Adrenal gland (tissue), 19 donors: ENCODE measurements at regions of chr10 and their contacts with region 1.

Region 1: DNA sequence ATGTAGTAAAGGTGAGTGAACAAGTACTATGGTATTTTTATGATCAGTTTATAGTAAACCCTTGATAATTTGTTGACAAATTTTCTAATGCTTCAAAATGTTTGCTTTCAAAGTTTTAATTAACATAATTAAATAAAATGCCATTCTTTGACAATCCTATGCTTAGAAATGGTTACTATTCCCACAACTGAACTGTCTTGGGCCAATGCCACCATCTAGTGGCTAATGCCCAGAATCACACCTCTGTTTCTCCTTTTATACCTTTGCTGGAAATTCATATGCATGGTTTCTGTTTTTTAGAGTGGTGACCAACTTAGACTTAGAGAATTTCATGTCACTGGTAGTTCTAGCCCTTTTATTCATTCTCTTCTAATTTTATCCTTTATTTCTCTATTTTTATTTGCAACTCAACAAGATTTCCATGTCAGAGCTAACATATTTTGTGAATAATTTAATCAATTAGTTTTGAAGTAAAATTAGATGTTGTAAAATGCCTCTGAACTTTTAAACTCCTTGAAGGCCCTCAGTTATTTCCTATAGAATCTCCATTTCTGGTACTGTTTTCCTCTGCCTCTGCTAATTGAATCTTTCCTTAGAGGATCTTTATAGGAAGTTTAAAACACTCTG is 31.1 kb downstream of the PCGF5 start:
- DNase-seq: peak; percentile 38 to 81 (median 54)
- H3K4me3 ChIP-seq: no peak overlapping the region
- H3K27ac ChIP-seq: no peak overlapping the region
- H3K4me1 ChIP-seq: peaks cover 0 to 7% of the 10 kb centered on the region in 2 donors
- H3K27me3 ChIP-seq: no peaks in the 10 kb centered on the region
- CTCF ChIP-seq: peak; percentile 70 to 97 (median 94)
- POLR2A ChIP-seq: no peak

Region 2: GRCh38 chr10:90912174-90912573 is 339.4 kb before region 1 on chr10:
- intact Hi-C with region 1: loop called in 1 of 2 experiments (anchors 10 kb)
- DNase-seq: no peak
- H3K4me3 ChIP-seq: no peak overlapping the region
- H3K27ac ChIP-seq: no peak overlapping the region
- H3K4me1 ChIP-seq: peaks cover 0 to 7% of the 10 kb centered on the region in 2 donors
- H3K27me3 ChIP-seq: no peaks in the 10 kb centered on the region
- CTCF ChIP-seq: no peak
- POLR2A ChIP-seq: no peak

Region 3: DNA sequence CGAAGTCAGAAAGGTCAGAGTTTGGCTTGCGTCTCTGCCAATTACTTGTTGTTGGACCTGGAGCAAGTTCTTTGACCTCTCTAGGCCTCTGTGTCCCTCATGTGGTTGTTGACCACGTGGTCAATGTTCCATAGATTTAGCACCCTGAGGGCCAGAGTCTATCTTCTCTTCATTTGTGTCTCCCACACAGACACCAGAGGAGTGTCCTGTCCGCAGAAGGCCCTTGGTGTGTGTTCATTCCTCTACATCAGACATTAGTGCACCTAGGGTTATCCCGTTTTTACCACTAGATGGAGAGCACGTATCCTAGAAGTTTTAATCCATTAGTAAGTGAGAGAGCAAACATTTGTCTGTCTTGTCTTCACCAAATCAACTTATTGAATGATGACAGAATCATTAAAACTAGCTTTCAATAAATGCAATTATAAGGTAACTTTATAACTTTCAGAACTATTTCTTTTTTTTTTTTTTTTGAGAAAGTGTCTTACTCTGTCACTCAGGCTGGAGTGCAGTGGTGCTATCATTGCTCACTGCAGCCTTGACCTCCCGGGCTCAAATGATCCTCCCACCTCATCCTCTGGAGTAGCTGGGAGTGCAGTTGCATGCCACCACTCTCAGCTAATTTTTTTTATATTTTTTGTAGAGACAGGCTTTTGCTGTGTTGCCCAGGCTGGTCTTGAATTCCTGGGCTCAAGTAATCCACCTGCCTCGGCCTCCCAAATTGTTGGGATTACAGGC is 208.2 kb before region 1 on chr10:
- intact Hi-C with region 1: loop called in 1 of 2 experiments (anchors 10 kb)
- DNase-seq: peak in 6 of 7 donors; percentile 54 to 72 (median 68)
- H3K4me3 ChIP-seq: no peak overlapping the region
- H3K27ac ChIP-seq: peak overlapping the region in 3 of 5 donors; percentile 10 to 23 (median 14)
- H3K4me1 ChIP-seq: peaks cover 15 to 38% of the 10 kb centered on the region in 2 donors
- H3K27me3 ChIP-seq: no peaks in the 10 kb centered on the region
- CTCF ChIP-seq: peak; percentile 45 to 80 (median 70)
- POLR2A ChIP-seq: no peak

Region 4: GRCh38 chr10:91061608-91062007 is 189.9 kb before region 1 on chr10:
- intact Hi-C with region 1: no loop called
- DNase-seq: peak in 2 of 7 donors; percentile 12 to 57
- H3K4me3 ChIP-seq: no peak overlapping the region
- H3K27ac ChIP-seq: peak overlapping the region in 1 of 5 donors; percentile 73
- H3K4me1 ChIP-seq: no peaks in the 10 kb centered on the region
- H3K27me3 ChIP-seq: no peaks in the 10 kb centered on the region
- CTCF ChIP-seq: no peak
- POLR2A ChIP-seq: no peak

Region 5: DNA sequence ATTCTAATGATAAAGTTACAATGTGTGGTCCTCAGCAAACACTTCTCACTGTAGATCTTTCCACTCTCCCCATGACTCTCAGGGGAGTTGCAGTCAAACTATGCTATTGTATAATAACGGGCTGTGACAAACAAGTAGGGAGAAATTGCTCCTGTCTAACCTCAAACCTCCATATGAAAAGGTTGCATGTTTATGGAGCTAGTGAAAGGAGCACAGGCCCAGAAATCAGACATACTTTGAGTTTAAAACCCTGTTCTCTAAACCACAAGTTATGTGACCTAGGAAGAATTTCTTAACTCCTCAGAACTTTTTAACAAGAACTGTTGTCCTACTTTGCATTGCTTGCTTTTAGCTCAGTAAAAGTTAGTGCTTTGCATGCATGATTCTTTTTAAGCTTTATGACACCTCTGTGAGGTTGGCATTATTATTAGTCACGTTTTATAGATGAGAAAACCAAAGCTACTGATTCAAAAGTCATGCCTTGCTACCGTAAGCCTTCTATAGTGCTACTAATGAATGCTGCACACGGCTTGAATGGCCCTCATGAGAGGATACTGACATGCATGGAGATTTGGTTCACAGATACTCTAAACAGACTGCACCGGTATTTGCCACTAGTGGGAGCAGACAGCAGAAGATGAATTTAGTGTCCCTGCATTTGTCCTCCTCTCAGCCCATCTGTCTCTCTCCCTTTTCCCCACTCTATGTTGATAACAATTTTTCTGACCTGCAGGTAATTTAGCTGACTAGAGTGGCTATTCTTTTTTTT is 160.6 kb before region 1 on chr10:
- intact Hi-C with region 1: loop called in 1 of 2 experiments (anchors 10 kb)
- DNase-seq: peak in 1 of 7 donors; percentile 19
- H3K4me3 ChIP-seq: no peak overlapping the region
- H3K27ac ChIP-seq: no peak overlapping the region
- H3K4me1 ChIP-seq: peaks cover 0 to 11% of the 10 kb centered on the region in 2 donors
- H3K27me3 ChIP-seq: no peaks in the 10 kb centered on the region
- CTCF ChIP-seq: peak in 3 of 6 experiments; percentile 8 to 26 (median 16)
- POLR2A ChIP-seq: no peak

Region 6: DNA sequence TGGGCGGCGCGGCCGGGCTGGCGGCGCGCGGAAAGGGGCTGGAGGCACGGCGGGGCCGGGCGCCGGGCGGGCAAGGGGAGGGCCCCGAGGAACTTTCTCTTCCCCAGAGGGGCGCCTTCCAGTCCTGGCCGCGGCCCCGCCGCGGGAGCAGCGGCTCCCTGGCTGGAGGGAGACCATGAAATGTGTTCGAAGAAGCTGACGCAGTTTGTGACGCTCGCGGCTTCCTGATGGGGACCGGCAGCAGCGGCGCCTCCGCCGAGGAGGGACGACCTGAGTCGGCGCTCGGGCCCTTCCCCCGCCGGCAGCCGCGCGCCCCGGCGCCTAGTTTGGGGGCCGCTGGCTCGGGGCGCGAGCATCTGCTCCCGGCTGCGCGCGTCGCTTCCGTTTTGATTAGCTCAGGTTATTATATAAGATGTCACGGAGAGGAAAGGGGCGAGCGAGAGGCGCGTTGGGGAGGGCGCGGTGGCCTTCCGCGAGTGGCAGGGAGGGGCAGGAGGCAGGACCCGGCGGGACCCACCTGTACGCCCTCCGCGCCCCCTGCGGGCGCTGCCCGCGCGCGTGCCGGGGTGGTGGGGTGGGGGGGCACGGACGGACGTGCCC is 88.2 kb before region 1 on chr10:
- intact Hi-C with region 1: loop called in 1 of 2 experiments (anchors 10 kb)
- DNase-seq: peak in 6 of 7 donors; percentile 67 to 81 (median 74)
- H3K4me3 ChIP-seq: peak overlapping the region; percentile 45 to 98 (median 90)
- H3K27ac ChIP-seq: peak overlapping the region; percentile 96 to 99 (median 99)
- H3K4me1 ChIP-seq: peaks cover 7 to 35% of the 10 kb centered on the region in 2 donors
- H3K27me3 ChIP-seq: no peaks in the 10 kb centered on the region
- CTCF ChIP-seq: peak in 1 of 6 experiments; percentile 7
- POLR2A ChIP-seq: peak; percentile 64 to 71